GM12878 (cell line): ENCODE measurements at regions of chr22 and their contacts with region 1.

Region 1: GRCh38 chr22:41448189-41448808 is 1.7 kb upstream of the TOB2 start:
- DNase-seq: peak; percentile 99
- ATAC-seq: peak; percentile 70
- H3K4me3 ChIP-seq: peak overlapping the region; percentile 86
- H3K27ac ChIP-seq: peak overlapping the region; percentile 88
- H3K4me1 ChIP-seq: no peaks in the 10 kb centered on the region
- H3K27me3 ChIP-seq: no peaks in the 10 kb centered on the region
- CTCF ChIP-seq: no peak
- EP300 ChIP-seq: peak; percentile 9 to 63; a peak in 2 of 4 replicates
- POLR2A ChIP-seq: no peak
- RAD21 ChIP-seq: no peak

Region 2: GRCh38 chr22:41327124-41327523 is 121.2 kb before region 1 on chr22:
- CTCF ChIA-PET with region 1: no interaction called
- POLR2A ChIA-PET with region 1: no interaction called
- RAD21 ChIA-PET with region 1: no interaction called
- SMC1A ChIA-PET with region 1: no interaction called
- in situ Hi-C with region 1: no loop called
- intact Hi-C with region 1: no loop called
- DNase-seq: no peak
- ATAC-seq: no peak
- H3K4me3 ChIP-seq: no peak overlapping the region
- H3K27ac ChIP-seq: no peak overlapping the region
- H3K4me1 ChIP-seq: no peaks in the 10 kb centered on the region
- H3K27me3 ChIP-seq: no peaks in the 10 kb centered on the region
- CTCF ChIP-seq: no peak
- EP300 ChIP-seq: no peak
- POLR2A ChIP-seq: no peak; the same call in 1 of the 2 replicates
- RAD21 ChIP-seq: no peak

Region 3: DNA sequence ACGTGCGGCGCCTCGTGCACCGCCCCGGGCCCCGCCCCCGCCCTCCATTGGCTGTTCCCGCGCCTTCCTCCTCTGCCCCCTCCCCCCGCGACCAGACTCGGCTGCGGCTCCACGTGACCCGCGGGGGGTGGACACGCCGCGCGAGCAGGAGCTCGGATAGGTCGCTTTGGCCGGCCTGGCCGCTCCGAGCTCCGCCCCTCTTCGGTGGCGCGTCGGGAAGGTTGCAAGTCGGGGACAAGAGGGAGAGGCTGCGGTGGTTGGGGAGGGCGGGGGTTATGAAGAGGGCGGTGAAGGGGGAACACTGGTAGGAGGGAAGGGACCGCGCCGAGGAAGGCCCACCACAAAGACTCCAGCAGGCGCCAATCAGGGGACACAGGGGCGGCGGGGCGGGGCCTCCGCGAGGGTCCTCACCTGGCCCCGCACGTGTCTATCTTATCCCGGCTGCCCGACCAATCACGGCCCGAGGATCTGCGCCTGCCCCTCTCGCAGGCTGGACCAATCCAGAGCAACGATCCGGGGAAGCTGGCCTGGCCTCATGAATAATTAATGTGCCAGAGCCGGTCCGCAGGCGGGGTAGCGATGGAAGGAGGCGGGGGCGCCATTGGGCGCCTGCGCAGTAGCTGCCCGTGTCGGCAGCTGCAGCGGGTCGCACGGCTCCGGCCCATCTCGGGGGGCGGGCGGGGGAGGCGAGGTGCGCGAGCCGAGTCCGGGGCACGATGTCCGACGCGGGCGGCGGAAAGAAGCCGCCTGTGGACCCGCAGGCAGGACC is 66.8 kb before region 1 on chr22 and contains the start of gene TEF:
- CTCF ChIA-PET with region 1: no interaction called
- POLR2A ChIA-PET with region 1: interaction called, 12 read pairs
- RAD21 ChIA-PET with region 1: interaction called, 8 read pairs
- SMC1A ChIA-PET with region 1: no interaction called
- in situ Hi-C with region 1: no loop called
- intact Hi-C with region 1: no loop called
- DNase-seq: peak; percentile 91
- ATAC-seq: peak; percentile 97
- H3K4me3 ChIP-seq: peak within 1 kb of the TSS; percentile 90
- H3K27ac ChIP-seq: peak within 1 kb of the TSS; percentile 74
- H3K4me1 ChIP-seq: peaks cover 7% of the 10 kb centered on the region
- H3K27me3 ChIP-seq: no peaks in the 10 kb centered on the region
- CTCF ChIP-seq: no peak
- EP300 ChIP-seq: no peak
- POLR2A ChIP-seq: peak; percentile 67
- RAD21 ChIP-seq: no peak
- polyA plus RNA-seq, gene TEF: 0.23 to 0.27 TPM

Region 4: GRCh38 chr22:41468381-41469217 is 20.3 kb after region 1 on chr22 and contains the starts of genes ACO2 and PHF5A:
- CTCF ChIA-PET with region 1: interaction called, 8 read pairs
- POLR2A ChIA-PET with region 1: interaction called, 88 read pairs
- RAD21 ChIA-PET with region 1: interaction called, 22 read pairs
- SMC1A ChIA-PET with region 1: interaction called, 18 read pairs
- in situ Hi-C with region 1: no loop called
- intact Hi-C with region 1: loop called (anchors 1 kb)
- DNase-seq: peak; percentile 98
- ATAC-seq: peak; percentile 95
- H3K4me3 ChIP-seq: peak within 1 kb of the TSS; percentile 80
- H3K27ac ChIP-seq: peak within 1 kb of the TSS; percentile 97
- H3K4me1 ChIP-seq: peaks cover 14% of the 10 kb centered on the region
- H3K27me3 ChIP-seq: no peaks in the 10 kb centered on the region
- CTCF ChIP-seq: no peak
- EP300 ChIP-seq: peak in 1 of 2 experiments; percentile 32; a peak in 1 of 4 replicates
- POLR2A ChIP-seq: peak; percentile 81
- RAD21 ChIP-seq: no peak
- polyA plus RNA-seq, gene ACO2: 21.4 to 22.3 TPM
- polyA plus RNA-seq, gene PHF5A: 40.5 to 77.0 TPM

Region 5: DNA sequence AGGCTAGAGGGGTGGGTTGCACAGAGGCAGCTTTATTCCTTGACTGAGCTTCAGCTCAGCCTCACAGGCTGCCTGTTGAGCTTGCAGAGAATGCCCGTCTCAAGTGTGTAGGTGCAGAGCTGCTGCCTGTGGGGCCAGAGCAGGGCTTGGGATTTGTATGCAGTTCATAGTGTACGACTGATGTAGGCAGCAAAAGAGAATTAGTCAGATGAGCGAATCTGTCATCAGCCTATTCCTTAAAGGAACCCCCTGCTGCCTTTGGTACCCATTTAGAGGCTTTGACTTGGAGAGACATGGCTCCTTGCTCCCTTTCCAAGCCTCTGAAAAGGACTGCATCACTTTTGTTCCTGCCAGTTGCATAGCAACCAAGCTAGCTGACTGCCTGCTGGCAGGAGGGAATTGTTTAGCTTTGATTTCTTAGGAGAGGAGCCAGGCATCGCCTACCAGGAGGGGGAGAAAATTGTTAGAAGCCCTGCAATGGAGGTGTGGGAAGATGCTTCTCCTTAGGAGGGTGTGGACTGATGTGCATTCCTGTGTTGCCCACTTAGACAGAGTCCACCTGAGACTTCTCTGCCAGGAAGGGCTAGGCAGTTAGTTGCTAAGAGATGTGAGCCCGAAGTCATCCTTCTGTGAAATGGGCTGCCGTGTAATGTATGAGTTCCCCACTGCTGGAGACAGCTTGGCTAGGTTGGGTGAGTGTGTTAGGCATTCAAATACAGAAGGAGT is 31.5 kb after region 1 on chr22:
- CTCF ChIA-PET with region 1: interaction called, 5 read pairs
- POLR2A ChIA-PET with region 1: interaction called, 122 read pairs
- RAD21 ChIA-PET with region 1: interaction called, 16 read pairs
- SMC1A ChIA-PET with region 1: interaction called, 13 read pairs
- in situ Hi-C with region 1: no loop called
- intact Hi-C with region 1: no loop called
- DNase-seq: no peak
- ATAC-seq: no peak; the same call in 2 of the 3 replicates
- H3K4me3 ChIP-seq: no peak overlapping the region
- H3K27ac ChIP-seq: peak overlapping the region; percentile 52
- H3K4me1 ChIP-seq: peaks cover 60% of the 10 kb centered on the region
- H3K27me3 ChIP-seq: no peaks in the 10 kb centered on the region
- CTCF ChIP-seq: no peak
- EP300 ChIP-seq: no peak
- POLR2A ChIP-seq: no peak
- RAD21 ChIP-seq: no peak

Region 6: GRCh38 chr22:41501209-41501608 is 52.9 kb after region 1 on chr22:
- CTCF ChIA-PET with region 1: interaction called, 4 read pairs
- POLR2A ChIA-PET with region 1: interaction called, 7 read pairs
- RAD21 ChIA-PET with region 1: interaction called, 10 read pairs
- SMC1A ChIA-PET with region 1: interaction called, 12 read pairs
- in situ Hi-C with region 1: no loop called
- intact Hi-C with region 1: loop called (anchors 5 kb)
- DNase-seq: peak; percentile 27
- ATAC-seq: peak; percentile 93
- H3K4me3 ChIP-seq: no peak overlapping the region
- H3K27ac ChIP-seq: no peak overlapping the region
- H3K4me1 ChIP-seq: no peaks in the 10 kb centered on the region
- H3K27me3 ChIP-seq: no peaks in the 10 kb centered on the region
- CTCF ChIP-seq: peak; percentile 46 to 71 (median 52); a peak in 5 of 6 replicates
- EP300 ChIP-seq: no peak
- POLR2A ChIP-seq: no peak
- RAD21 ChIP-seq: peak; percentile 67

Region 7: GRCh38 chr22:41565403-41566054 is 117.2 kb after region 1 on chr22:
- CTCF ChIA-PET with region 1: no interaction called
- POLR2A ChIA-PET with region 1: no interaction called
- RAD21 ChIA-PET with region 1: no interaction called
- SMC1A ChIA-PET with region 1: no interaction called
- in situ Hi-C with region 1: no loop called
- intact Hi-C with region 1: no loop called
- DNase-seq: no peak
- ATAC-seq: peak; percentile 44; the same call in 2 of the 3 replicates
- H3K4me3 ChIP-seq: no peak overlapping the region
- H3K27ac ChIP-seq: no peak overlapping the region
- H3K4me1 ChIP-seq: no peaks in the 10 kb centered on the region
- H3K27me3 ChIP-seq: peaks cover 0 to 5% of the 10 kb centered on the region in 2 experiments; a peak in 2 of 4 replicates
- CTCF ChIP-seq: no peak
- EP300 ChIP-seq: no peak
- POLR2A ChIP-seq: no peak
- RAD21 ChIP-seq: no peak